Esophagus muscularis mucosa (tissue), 4 donors: ENCODE measurements at regions of chr15 and their contacts with region 1.

Region 1: GRCh38 chr15:51281368-51281967 is 56.9 kb downstream of the CYP19A1 start:
- DNase-seq: no peak
- H3K4me3 ChIP-seq: no peak overlapping the region
- H3K27ac ChIP-seq: no peak overlapping the region
- H3K4me1 ChIP-seq: peaks cover 0 to 14% (median 0%) of the 10 kb centered on the region in 4 donors
- H3K27me3 ChIP-seq: peaks cover 0 to 8% (median 0%) of the 10 kb centered on the region in 4 donors
- CTCF ChIP-seq: peak; percentile 66 to 78 (median 68)
- EP300 ChIP-seq: no peak
- POLR2A ChIP-seq: no peak

Region 2: GRCh38 chr15:50633653-50634052 is 647.8 kb before region 1 on chr15:
- intact Hi-C with region 1: no loop called
- DNase-seq: no peak
- H3K4me3 ChIP-seq: no peak overlapping the region
- H3K27ac ChIP-seq: no peak overlapping the region
- H3K4me1 ChIP-seq: no peaks in the 10 kb centered on the region
- H3K27me3 ChIP-seq: no peaks in the 10 kb centered on the region
- CTCF ChIP-seq: no peak
- EP300 ChIP-seq: no peak
- POLR2A ChIP-seq: no peak

Region 3: GRCh38 chr15:51380999-51381795 is 99.7 kb after region 1 on chr15:
- intact Hi-C with region 1: loop called (anchors 2 kb)
- DNase-seq: no peak
- H3K4me3 ChIP-seq: no peak overlapping the region
- H3K27ac ChIP-seq: no peak overlapping the region
- H3K4me1 ChIP-seq: peaks cover 6 to 32% (median 28%) of the 10 kb centered on the region in 4 donors
- H3K27me3 ChIP-seq: peaks cover 0 to 18% (median 0%) of the 10 kb centered on the region in 4 donors
- CTCF ChIP-seq: peak; percentile 85 to 89 (median 88)
- EP300 ChIP-seq: no peak
- POLR2A ChIP-seq: no peak

Region 4: DNA sequence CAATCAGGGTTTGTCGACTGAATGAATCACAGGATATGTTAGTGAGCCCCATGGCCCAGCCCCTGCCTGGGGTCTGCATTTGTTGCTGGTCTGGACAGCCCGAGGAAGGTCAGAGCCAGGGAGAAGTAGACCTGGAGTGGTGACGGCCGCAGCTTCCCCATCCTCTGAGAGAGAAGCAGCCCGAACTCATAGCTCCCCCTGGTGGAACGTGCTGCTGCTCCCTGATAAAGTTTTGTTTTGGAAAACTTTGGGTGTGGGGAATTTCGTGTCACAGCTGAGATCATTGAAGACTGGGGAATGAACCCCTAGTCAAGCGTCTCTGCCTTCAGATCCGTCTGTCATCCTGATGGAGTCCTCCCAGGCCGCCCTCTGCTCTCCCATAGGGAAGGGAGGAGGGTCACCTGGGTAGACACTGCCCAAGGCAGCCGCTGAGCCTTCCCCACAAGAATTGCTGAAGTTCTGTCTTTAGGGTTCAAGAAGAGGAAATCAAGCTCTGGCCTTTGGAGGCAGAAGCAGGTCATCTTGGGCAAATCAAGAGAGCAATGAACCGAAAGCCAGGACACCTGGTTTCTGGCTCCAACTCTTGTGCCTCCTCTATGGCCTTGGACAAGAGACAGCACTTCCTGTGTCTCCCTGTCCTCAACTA is 120.5 kb after region 1 on chr15:
- intact Hi-C with region 1: loop called (anchors 5 kb)
- DNase-seq: peak; percentile 92
- H3K4me3 ChIP-seq: no peak overlapping the region
- H3K27ac ChIP-seq: no peak overlapping the region
- H3K4me1 ChIP-seq: peaks cover 0 to 8% (median 3%) of the 10 kb centered on the region in 4 donors
- H3K27me3 ChIP-seq: peaks cover 0 to 6% (median 0%) of the 10 kb centered on the region in 4 donors
- CTCF ChIP-seq: peak in 2 of 3 experiments; percentile 31 to 48
- EP300 ChIP-seq: no peak
- POLR2A ChIP-seq: no peak

Region 5: DNA sequence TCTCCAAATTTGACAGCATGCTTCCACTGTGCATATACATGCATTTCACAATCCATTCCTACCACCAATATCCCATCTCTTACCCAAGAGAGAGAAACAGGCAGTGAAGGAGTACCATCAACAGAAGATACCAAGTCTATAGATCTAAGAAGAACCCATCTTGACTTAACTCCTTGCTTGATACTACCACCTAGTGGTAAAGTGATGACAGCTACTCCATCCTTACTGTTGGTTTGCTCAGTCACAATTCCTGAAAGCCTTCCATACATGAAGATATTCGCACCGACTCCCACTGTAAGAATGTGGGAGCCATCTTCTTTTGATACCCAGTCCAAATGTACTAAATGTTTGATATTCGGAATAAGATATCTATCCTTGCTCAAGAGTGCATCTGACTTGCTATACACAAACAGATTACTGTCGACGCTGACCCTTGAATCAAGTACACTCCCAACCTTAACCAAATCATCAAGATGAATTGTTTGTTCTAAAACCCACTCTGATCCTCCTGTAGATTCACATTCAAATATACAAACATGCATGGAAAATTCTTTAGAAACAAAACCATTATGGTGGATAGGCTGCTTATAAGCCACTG is 218.0 kb after region 1 on chr15:
- intact Hi-C with region 1: no loop called
- DNase-seq: no peak
- H3K4me3 ChIP-seq: no peak overlapping the region
- H3K27ac ChIP-seq: no peak overlapping the region
- H3K4me1 ChIP-seq: no peaks in the 10 kb centered on the region
- H3K27me3 ChIP-seq: no peaks in the 10 kb centered on the region
- CTCF ChIP-seq: peak in 1 of 3 experiments; percentile 27
- EP300 ChIP-seq: no peak
- POLR2A ChIP-seq: no peak